Psoas muscle (tissue), 8 donors: ENCODE measurements at regions of chr1 and their contacts with region 1.

Region 1: GRCh38 chr1:157045251-157046218 is at the start of gene ARHGEF11:
- DNase-seq: peak; percentile 95 to 96
- ATAC-seq: peak; percentile 98 to 99 (median 98)
- H3K4me3 ChIP-seq: peak within 1 kb of the TSS; percentile 78
- H3K27ac ChIP-seq: peak within 1 kb of the TSS; percentile 88
- H3K4me1 ChIP-seq: peaks cover 41% of the 10 kb centered on the region
- H3K27me3 ChIP-seq: no peaks in the 10 kb centered on the region
- CTCF ChIP-seq: no peak
- total RNA-seq, gene ARHGEF11: 19.9 to 22.8 (median 20.9) TPM

Region 2: DNA sequence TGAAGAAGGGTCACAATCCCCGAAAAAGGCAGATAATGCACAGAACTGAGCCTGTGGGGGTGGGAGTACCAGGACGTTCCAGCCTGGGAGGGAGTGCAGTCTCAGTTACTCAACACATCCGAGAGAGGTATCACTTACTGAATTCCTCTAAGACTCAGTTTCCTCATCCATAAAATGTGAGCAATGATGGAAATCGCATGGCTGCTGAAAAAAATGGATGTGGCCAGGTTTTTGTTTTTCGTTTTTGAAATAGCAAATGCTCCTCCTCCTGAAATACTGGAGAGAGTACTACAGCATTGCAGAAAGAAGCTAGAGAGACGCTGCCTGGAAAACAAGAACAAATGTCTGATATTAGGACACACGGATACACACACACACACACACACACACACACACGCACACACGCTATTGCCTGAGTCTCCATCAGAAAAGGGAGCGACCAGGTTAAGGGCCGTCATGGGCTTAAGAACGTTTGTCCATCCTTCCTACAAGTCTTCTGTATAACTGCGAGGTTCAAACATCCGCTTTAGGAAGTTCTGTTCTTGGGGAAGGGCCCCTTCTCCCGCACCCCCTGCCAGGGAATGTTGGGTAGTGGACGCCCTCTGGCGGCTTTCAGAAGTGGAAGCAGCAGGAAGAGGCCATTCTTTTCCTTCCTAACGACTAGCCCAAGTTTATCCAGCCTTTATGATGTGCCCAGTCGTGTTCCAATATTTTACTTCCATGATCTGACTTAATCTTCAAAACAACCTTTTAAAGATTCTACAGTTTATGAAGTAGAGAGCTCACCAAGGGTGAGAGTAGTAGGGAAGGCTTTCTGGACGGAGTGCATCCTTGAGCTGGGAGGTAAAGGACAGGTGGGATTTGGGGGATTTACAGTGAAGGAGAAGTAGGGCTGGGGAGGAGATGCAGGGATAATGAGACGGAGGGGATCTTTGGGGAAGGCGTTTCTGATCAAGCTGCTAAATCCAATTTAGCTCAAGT is 367.6 kb before region 1 on chr1:
- intact Hi-C with region 1: no loop called
- DNase-seq: peak; percentile 78 to 87
- ATAC-seq: peak; percentile 71 to 90 (median 76)
- H3K4me3 ChIP-seq: peak overlapping the region; percentile 74
- H3K27ac ChIP-seq: peak overlapping the region; percentile 80
- H3K4me1 ChIP-seq: peaks cover 37% of the 10 kb centered on the region
- H3K27me3 ChIP-seq: peaks cover 0 to 9% (median 2%) of the 10 kb centered on the region in 3 donors
- CTCF ChIP-seq: peak; percentile 90

Region 3: DNA sequence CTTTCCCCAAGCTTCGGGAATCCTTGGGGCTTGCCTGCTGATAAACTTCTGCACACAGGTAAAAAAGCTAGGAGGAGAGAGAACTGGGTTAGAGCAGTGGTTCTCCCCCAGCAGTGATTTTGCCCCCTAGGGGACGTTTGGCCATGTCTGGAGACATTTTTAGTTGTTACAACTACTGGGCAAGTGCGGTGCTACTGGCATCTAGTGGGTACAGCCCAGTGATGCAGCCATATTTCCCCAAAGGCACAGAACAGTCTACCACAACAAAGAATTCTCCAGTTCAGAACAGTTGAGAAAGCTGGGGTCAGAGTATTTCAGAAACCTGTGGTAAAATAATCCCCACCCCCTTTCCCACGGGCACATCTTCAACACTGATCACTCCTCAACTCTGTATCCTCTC is 83.8 kb before region 1 on chr1:
- intact Hi-C with region 1: loop called in 1 of 2 experiments (anchors 2 kb)
- DNase-seq: no peak
- ATAC-seq: no peak
- H3K4me3 ChIP-seq: no peak overlapping the region
- H3K27ac ChIP-seq: no peak overlapping the region
- H3K4me1 ChIP-seq: peaks cover 4% of the 10 kb centered on the region
- H3K27me3 ChIP-seq: no peaks in the 10 kb centered on the region
- CTCF ChIP-seq: no peak